ENCODE measurements at regions of chr11 and their contacts with region 1.

Region 1: DNA sequence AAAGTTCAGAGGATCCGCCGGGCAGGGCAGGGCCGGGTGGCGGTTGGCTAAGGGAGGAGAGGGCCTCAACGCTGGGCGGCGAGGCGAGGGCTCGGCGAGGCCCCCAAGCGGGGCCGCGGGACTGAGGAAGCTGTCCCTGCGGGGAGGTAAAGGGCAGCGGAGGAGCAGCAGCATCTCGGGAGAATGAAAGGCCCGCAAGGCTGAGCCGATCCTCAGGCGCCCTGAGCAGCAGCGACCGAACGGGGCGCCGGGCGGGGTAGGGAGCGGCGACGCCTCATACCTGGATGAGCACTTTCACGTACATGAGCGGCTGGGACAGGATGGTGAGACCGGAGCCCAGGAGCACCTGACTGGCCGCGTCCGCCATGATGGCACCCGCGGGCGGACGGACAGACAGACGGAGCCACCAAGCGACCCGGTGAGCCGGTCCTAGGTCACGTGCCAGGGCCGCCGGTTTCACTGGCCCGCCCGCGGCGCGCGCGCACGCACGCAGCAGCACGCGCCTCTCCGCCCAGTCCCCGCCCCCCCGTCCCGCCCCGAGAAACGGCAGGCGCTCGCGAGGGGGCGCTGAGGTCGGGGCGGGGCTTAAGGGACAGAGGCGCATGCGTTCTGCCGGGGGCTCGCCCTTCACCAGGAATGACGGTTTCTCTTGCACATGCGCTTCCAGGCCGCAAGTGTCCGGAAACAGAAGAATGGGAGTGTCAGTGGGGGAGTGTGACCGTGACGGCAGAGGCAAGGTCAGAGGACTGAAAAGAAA is at the start of gene MTCH2:
- DNase-seq: peak; percentile 90 to 99 (median 94)

Region 2: GRCh38 chr11:47578524-47579460 is 63.5 kb before region 1 on chr11 and contains the starts of genes KBTBD4 and NDUFS3:
- intact Hi-C with region 1: loop called (anchors 5 kb)
- DNase-seq: peak; percentile 86 to 98 (median 90)

Region 3: DNA sequence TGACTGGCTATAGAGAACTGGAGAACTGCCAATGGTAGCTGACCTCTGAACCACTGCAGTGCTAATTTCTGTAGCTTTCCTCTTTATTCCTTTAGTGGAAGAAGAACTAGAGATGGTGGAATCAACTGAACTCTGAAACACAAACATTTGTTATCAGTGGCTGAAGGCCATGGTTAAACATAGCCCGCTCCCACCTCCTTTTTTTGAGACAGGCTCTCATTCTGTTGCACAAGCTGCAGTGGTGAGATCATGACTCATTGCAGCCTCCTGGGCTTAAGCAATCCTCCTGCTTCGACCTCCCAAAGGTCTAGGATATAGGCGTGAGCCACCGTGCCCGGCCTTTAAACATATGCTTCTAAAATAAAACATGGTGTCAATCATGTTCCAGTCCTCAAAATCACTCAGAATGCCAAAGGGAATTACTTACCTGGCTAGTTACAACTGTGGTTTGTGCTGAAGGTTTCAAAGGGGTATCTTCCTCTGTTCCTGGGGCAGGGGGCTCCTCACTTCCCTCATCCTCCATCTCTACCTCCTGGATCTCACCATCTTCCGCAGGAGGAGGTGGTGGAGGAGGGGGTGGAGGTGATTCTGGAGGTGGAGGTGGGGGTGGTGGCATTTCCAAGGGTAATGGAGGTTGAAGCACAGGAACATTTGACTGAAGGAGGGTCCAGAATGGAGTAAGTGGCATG is 81.9 kb after region 1 on chr11:
- intact Hi-C with region 1: loop called (anchors 2 kb)
- DNase-seq: no peak

Region 4: DNA sequence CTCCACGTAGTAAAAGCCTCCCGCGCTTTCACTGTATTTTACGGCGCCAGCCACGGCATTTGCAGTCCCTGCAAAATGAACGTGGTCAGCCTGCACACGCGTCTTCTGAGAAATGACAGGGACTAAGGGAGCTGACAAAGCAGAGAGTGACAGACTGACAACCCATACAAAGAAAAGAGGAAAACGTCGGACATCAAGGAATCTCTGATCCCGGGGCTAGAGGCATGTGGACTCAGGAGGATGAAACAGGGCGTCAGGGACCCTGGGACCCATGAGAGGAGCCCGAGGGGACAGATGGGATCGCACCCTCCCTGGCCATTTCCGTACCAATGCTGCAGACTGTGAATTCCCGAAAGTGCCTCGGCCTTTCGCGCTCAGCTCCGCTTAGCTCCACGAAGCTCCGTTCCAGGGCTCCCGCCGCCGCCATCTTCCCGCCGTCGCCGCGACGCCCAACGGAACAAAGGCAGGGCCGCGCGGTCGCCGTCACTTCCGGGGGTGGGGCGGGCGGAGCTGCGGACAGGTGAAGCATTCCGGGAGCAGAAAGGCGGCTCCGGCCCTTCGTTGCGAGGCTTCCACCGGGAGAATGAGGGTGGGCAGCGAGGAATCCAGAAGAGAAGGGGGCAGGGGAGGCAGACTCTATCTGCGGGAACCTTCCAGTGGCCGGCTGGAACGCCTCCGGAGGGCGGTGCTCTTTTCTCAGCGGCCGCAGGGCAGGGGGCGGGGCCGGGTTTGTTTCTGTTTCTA is 205.8 kb after region 1 on chr11 and contains the start of gene NUP160:
- intact Hi-C with region 1: loop called (anchors 10 kb)
- DNase-seq: peak; percentile 80 to 98 (median 88)